ENCODE measurements at regions of chr10 and their contacts with region 1.

Region 1: GRCh38 chr10:63711867-63712716 is 190.9 kb downstream of the REEP3 start:
- DNase-seq: peak; percentile 93
- ATAC-seq: peak; percentile 94

Region 2: DNA sequence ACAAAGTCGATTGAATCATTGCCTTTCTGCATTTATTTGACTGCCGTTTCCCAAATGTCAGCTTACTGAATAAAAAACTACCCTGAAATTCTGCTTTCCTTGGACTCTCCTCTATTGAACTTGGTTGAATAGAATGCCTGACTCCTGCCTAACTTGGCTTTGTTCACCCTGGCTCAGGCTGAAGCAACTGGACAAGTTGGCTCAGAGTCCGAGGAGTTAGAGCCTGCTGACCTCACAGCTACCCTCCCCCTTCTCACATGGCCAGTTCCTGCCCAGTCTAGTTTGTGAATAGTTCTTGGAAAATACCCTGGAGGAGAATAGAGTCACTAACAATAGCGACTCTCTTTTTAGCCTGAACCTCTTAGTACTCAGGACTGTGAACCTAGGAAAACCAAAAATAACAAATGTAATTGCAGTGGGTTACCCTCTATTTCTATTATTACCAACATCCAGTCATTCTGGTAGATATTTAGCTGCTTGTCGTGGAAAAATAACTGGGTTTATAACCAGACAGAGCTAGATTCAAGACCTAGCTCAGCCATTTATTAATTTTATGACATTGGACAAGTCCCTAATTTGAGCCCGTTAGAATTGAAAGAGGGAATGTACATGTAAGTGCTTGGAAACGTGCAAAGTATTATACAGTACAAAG is 596.2 kb before region 1 on chr10:
- intact Hi-C with region 1: loop called (anchors 2 kb)
- DNase-seq: peak; percentile 83
- ATAC-seq: peak; percentile 96

Region 3: DNA sequence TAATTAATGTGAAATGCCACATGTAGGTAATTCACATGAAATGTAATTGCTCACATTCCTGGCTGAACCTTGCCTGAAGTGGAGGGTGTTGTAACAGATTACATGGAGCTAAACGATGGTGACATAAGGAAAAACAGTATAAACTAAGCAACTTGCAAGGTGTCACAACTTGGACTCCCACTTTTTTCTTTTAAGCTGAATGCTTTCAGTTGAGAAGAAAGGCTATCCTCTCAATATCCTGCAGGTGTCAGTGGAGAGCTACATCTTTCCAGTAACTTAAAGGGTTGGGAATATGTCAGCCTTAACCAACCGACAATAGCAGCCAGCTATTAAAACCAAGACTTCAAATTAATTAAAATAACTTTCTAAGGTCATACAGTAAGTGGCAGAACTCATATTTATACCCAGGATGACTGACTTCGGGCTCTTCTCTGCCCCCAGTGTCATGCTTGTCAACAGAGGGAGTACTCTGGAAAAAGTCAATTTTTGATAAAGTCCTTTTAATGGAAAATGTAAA is 545.3 kb before region 1 on chr10:
- intact Hi-C with region 1: loop called (anchors 2 kb)
- DNase-seq: no peak
- ATAC-seq: peak; percentile 49

Region 4: DNA sequence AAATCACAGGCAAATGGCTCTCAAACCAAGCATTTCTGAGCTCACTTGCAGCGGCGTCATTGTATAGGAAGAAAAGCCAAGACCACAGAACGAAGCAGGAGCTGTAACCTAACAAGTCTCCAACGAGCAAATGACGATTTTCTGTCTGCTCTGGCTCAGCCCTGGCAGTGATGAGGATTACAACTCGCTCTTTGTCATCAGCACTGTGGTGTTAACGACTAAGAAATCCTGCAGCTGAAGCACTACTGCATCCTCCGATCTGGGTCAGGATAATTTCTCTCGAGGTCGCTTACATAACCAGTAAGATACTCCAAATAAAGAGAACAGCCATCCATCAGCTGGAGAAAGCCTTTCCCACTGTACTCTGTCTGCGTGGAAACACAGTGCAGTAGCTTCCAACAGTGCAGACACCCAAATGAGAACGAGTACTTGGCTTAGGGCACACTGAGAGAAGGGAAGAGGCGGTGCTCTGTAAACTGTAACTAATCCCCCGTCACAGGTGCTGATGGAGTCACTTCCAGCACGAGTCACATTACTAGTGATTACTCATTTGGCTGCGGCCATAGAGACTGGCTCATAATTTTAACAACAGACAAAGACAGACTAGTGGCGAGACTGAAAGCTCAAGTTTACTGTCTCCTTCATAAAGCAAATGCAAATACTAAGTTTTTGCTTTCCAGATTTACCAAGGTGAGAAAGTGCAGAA is 443.1 kb before region 1 on chr10:
- intact Hi-C with region 1: loop called (anchors 5 kb)
- DNase-seq: peak; percentile 79
- ATAC-seq: peak; percentile 98

Region 5: DNA sequence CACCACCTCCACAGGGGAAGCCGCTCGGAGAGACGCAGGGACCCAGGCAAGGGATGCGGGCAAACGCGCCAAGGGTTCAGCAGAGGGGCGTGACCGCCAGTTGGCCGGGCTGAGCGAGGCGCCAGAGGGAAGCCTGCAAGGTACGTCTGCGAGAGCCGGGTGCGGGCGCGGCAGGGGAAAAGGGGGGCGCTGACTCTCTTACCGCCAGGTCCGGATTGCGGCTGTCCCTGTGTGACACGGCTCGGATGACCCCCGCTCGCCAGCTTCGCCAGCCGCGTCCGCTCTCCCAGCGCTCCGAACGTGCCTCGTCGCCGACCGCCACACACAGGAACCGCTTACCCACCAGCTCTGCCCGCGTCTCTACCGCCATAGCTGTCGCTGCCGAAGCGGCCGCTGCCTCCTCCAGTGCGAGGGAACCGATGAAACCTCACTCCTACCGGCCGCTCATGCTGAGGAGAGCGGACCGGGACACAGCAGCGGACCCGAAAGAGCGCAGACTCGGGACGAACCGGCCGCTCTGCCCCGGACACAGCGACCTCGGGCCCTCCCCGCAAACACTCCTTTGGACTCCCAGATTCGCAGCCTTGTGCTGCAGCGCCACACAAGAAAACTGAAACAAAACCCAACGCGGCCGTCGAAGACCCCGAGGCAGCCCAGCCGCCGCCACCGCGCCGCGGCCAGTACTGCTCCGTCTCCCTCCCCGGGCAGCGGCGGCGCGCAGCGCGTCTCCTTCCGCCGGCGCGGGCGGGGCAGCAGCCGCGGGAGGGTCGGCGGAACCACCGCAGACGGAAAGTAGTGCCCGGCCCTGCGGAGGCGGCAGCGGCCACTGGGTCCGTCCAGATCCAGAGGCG is 246.6 kb before region 1 on chr10 and contains the start of gene JMJD1C:
- intact Hi-C with region 1: loop called (anchors 1 kb)
- DNase-seq: peak; percentile 91
- ATAC-seq: peak; percentile 93
- total RNA-seq, gene JMJD1C: 38.1 TPM

Region 6: GRCh38 chr10:63521416-63522276 is 190.4 kb before region 1 on chr10:
- intact Hi-C with region 1: loop called (anchors 5 kb)
- DNase-seq: peak; percentile 91
- ATAC-seq: peak; percentile 88

Region 7: DNA sequence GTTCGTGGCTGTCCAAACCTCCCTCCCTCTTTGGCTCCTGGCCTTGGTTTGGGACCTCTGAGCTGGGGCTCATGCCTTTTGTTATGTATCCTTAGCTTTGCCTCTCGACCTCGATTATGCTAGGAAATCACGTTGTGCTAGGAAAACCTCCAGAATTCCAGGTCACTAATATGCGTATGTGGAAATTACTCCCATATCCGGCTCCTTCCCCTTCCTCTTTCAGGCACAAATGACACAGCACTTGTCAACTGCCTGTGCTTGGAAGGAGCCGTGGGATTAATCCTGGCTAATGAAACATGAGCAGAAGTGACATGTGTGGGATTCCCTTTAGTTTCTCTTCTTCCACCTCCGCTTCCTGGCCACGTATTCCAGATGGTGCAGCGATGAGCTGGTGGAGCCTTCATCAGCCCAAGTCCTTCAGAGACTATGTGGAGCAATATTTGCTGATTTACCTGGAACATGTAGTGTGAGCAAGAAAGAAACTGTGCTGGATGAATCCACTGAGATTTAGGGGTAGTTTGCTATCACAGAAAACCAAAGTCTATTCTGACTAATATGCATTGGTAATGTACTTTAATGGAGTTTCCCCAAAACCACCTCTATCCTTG is 41.7 kb before region 1 on chr10:
- intact Hi-C with region 1: loop called (anchors 2 kb)
- DNase-seq: no peak
- ATAC-seq: peak; percentile 65

Measured in Right ventricle myocardium inferior (tissue), 1 donor.